ENCODE measurements at regions of chr17 and their contacts with region 1.

Region 1: DNA sequence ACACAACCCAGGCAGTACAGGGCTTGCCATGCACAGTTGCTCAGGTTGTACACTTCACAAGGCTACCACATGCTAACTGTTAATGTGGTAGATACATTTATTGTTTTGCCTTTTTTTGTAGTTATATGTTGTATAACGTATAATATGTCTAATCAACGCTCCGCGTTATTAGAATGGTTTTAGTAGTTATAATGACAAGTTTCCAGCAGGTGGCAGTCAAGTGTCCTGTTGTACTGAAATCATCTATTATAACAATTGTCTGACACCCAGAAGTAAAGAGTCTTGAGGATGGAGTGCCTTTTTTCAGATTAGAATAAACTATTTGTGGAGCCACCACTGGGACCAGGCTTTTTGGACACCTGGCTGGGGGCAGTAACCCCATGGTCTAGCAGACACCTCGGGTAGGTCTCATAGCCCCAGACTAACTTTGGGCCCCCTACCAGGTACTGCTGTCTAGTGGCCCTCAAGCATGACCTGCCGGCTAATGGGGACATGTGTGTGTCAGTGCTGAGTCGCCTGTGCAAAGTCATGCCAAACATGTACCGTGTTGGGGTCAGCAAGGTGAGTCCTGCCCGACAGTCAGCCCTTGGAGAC is 32.8 kb downstream of the MYO15A start:
- DNase-seq: peak in 1 of 3 donors; percentile 76
- ATAC-seq: peak; percentile 56
- H3K4me3 ChIP-seq: no peak overlapping the region
- H3K4me1 ChIP-seq: no peaks in the 10 kb centered on the region
- CTCF ChIP-seq: peak; percentile 26

Region 2: GRCh38 chr17:18038861-18039534 is 102.3 kb before region 1 on chr17 and contains the starts of genes ATPAF2 and GID4:
- intact Hi-C with region 1: no loop called
- DNase-seq: peak; percentile 99 to 100 (median 100)
- ATAC-seq: peak; percentile 97
- H3K4me3 ChIP-seq: peak within 1 kb of the TSS; percentile 77
- H3K4me1 ChIP-seq: peaks cover 18% of the 10 kb centered on the region
- CTCF ChIP-seq: no peak
- total RNA-seq, gene ATPAF2: 26.0 to 33.9 (median 27.2) TPM
- total RNA-seq, gene GID4: 5.8 to 24.4 (median 5.8) TPM

Region 3: GRCh38 chr17:18191967-18192366 is 50.7 kb after region 1 on chr17:
- intact Hi-C with region 1: loop called in 1 of 2 experiments (anchors 10 kb)
- DNase-seq: no peak
- ATAC-seq: no peak
- H3K4me3 ChIP-seq: no peak overlapping the region
- H3K4me1 ChIP-seq: peaks cover 33% of the 10 kb centered on the region
- CTCF ChIP-seq: no peak

Region 4: GRCh38 chr17:18344021-18344420 is 202.7 kb after region 1 on chr17:
- intact Hi-C with region 1: no loop called
- DNase-seq: no peak
- ATAC-seq: no peak
- H3K4me3 ChIP-seq: no peak overlapping the region
- H3K4me1 ChIP-seq: no peaks in the 10 kb centered on the region
- CTCF ChIP-seq: no peak